HEK293T (cell line): ENCODE measurements at regions of chr12 and their contacts with region 1.

Region 1: DNA sequence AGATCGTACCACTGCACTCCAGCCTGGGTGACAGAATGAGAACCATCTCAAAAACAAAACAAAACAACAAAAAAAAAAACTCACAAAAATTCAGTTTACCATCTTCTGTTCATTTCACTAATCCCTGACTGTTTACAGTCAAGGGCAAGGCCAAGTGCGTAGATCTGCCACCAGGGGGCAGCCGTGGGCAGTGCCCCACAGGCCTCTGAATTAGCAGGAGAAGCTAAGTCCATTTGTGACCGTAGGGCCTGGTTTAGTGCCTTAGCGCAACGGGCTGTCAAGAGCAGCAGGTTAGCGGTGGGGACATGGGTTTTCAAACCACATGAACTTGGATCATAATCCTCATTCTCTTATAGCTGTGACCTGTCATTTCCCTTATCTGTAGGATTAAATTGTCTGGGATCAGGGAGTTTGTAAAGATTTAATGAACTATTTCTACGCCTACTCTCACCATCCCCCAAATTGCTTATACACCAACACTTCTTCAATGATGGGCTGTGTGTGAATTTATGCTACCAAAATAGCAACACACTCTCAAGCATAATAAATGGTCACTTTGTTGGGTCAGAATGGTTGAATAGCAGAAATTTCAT is 49.0 kb downstream of the KCTD10 start:
- DNase-seq: peak; percentile 84

Region 2: GRCh38 chr12:109485201-109485600 is 57.1 kb after region 1 on chr12:
- CTCF ChIA-PET with region 1: interaction called, 11 read pairs
- POLR2A ChIA-PET with region 1: no interaction called
- DNase-seq: no peak